IMR-90 (cell line): ENCODE measurements at regions of chr6 and their contacts with region 1.

Region 1: DNA sequence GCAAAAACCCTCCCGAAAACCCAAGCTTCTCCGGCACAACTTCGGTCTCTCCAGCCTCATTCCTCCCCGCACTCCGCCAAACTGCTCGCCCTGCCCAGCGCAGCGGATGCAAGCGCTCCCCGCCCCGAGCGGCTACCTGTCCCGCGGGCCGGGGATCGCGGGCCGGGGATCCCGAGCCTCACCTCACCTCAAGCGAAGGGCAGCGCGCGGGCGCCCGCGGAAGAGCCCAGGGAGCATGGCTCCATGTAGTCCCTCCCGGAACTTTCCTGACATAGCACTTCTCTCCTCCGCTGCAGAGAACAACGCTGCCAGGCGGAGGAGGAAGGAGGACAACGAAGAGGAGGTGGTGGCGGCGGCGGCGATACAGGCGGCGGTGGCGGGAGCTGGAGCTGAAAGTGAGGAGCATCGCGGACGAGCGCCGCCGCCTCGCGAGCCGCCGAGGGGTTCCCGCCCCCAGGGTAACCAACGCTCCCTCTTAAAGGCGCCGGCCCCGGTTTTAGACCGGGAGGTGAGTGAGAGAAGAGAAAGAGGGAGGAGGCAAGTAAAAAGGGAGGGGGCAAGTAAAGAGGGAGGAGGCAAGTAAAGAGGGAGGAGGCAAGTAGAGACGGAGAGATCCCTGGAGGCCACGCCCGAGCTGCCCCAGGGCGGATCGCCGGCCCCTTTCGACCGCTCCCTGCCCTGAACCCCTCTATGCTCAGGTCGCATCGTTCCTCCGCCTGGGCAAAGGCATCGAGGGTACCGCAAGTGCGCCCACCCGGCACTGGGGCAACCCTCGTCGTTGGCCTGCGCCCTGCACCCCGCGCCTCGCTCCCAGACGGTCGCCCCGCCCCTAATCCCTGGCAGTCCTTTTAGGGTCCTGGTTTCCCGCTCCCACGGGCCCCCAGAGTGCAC is at the start of gene GPR63:
- DNase-seq: peak; percentile 52
- ATAC-seq: peak; percentile 93
- H3K4me3 ChIP-seq: peak within 1 kb of the TSS; percentile 87
- H3K27ac ChIP-seq: peak within 1 kb of the TSS; percentile 18; the same call in 1 of the 2 replicates
- H3K4me1 ChIP-seq: no peaks in the 10 kb centered on the region
- H3K27me3 ChIP-seq: peaks cover 8% of the 10 kb centered on the region; the same call in 1 of the 2 replicates
- CTCF ChIP-seq: no peak
- POLR2A ChIP-seq: no peak
- RAD21 ChIP-seq: no peak
- total RNA-seq, gene GPR63: 0.36 and 0.56 TPM in 2 replicates

Region 2: GRCh38 chr6:96194675-96195074 is 642.7 kb before region 1 on chr6:
- CTCF ChIA-PET with region 1: no interaction called
- POLR2A ChIA-PET with region 1: no interaction called
- dilution Hi-C with region 1: no loop called
- in situ Hi-C with region 1: no loop called
- intact Hi-C with region 1: no loop called
- DNase-seq: no peak
- ATAC-seq: no peak
- H3K4me3 ChIP-seq: no peak overlapping the region
- H3K27ac ChIP-seq: no peak overlapping the region
- H3K4me1 ChIP-seq: no peaks in the 10 kb centered on the region
- H3K27me3 ChIP-seq: no peaks in the 10 kb centered on the region
- CTCF ChIP-seq: no peak
- POLR2A ChIP-seq: no peak
- RAD21 ChIP-seq: no peak

Region 3: GRCh38 chr6:96626759-96627364 is 210.5 kb before region 1 on chr6:
- CTCF ChIA-PET with region 1: no interaction called
- POLR2A ChIA-PET with region 1: no interaction called
- dilution Hi-C with region 1: no loop called
- in situ Hi-C with region 1: no loop called
- intact Hi-C with region 1: loop called (anchors 1 kb)
- DNase-seq: peak; percentile 38
- ATAC-seq: peak; percentile 85
- H3K4me3 ChIP-seq: no peak overlapping the region
- H3K27ac ChIP-seq: no peak overlapping the region
- H3K4me1 ChIP-seq: no peaks in the 10 kb centered on the region
- H3K27me3 ChIP-seq: no peaks in the 10 kb centered on the region
- CTCF ChIP-seq: peak; percentile 52
- POLR2A ChIP-seq: no peak
- RAD21 ChIP-seq: peak; percentile 53

Region 4: DNA sequence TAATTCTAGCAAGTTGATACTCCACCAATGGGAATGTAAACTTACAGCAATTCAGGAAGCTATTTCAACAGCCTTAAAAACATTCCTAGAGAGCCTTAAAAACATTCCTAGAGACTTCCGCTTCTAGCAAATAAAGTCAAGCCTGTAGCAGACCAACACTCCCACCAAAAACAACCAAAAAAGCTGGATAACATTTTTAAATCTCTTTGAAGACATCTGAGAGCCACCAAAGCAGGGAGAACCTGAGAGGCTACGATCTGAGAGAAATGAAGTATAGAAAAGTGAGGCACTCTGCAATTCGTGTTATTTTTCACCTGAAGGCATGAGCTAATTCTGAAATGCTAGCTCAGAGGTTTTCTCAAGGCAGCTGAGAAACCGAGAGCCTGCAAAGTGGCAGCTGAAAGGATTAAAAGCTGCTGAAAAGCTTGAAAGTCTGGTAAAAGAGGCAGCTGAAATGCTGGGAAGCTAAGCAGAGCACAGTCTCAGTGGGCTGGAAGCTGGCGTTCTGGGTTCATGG is 21.0 kb before region 1 on chr6:
- CTCF ChIA-PET with region 1: no interaction called
- POLR2A ChIA-PET with region 1: no interaction called
- dilution Hi-C with region 1: no loop called
- in situ Hi-C with region 1: no loop called
- intact Hi-C with region 1: loop called (anchors 2 kb)
- DNase-seq: peak; percentile 48
- ATAC-seq: peak; percentile 74
- H3K4me3 ChIP-seq: no peak overlapping the region
- H3K27ac ChIP-seq: peak overlapping the region; percentile 41; the same call in 1 of the 2 replicates
- H3K4me1 ChIP-seq: peaks cover 6% of the 10 kb centered on the region
- H3K27me3 ChIP-seq: no peaks in the 10 kb centered on the region
- CTCF ChIP-seq: no peak
- POLR2A ChIP-seq: no peak
- RAD21 ChIP-seq: no peak